GM12878 (cell line): ENCODE measurements at regions of chr3 and their contacts with region 1.

Region 1: DNA sequence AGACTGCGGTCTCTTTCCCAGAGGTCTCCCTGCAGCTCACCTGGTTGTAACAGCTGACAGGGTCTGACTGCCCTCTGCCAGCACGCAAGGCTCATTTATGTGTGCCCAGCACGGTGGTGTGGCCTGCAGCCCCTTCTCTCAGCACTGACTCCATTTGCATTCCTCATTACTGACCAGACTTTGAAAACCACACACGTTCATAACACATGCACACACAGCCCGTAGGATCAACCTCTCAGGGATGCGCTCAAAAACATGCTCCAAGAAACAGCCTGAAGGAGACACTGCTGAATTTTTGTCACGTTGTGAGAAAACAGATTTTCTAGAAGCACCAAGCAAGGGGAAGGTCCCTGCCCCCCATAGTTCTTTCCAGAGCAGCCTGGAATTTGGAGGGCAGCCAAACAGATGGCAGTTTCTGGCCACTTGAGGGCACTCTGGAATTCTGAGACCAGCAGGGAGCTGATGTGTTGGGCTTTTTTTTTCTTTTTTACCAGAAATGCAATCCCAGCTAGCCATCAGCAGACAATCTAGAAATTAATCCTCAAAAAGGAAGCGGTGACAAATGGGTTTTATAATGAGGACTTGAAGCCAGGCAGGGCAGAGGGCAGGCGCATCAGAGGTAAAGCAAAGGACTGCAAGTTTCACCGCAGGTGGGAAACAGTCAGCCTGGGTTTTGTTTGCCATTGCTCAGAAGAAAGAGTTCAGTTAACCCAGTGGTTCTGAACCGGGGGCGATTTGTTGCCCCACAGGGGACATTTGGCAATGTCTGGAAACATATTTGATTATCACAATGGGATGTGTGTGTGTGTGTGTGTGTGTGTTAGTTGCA is 170.5 kb upstream of the PROK2 start:
- DNase-seq: peak; percentile 61
- ATAC-seq: peak; percentile 81
- H3K4me3 ChIP-seq: no peak overlapping the region
- H3K27ac ChIP-seq: no peak overlapping the region
- H3K4me1 ChIP-seq: peaks cover 22% of the 10 kb centered on the region
- H3K27me3 ChIP-seq: no peaks in the 10 kb centered on the region
- CTCF ChIP-seq: peak; percentile 46 to 81 (median 67); a peak in 5 of 6 replicates
- EP300 ChIP-seq: no peak
- POLR2A ChIP-seq: no peak
- RAD21 ChIP-seq: peak; percentile 85

Region 2: DNA sequence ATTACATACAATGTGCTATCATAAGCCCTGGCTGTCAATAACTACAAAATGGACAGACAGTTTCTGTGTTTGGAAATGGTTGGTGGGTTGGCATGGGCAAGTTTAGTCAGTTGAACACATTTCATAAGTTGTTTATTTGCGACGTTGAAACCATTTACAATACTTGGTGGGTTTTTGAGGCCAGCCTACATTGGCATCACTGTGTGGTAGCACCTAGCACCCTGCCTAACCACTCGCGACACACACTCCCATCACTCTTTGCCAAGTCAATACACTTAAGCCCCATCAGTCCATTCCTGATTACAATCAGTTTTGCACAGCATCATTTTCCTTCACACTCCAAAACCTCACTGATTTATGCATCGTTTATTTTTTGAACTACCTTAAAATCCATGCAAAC is 184.3 kb before region 1 on chr3:
- CTCF ChIA-PET with region 1: no interaction called
- POLR2A ChIA-PET with region 1: no interaction called
- RAD21 ChIA-PET with region 1: no interaction called
- SMC1A ChIA-PET with region 1: no interaction called
- in situ Hi-C with region 1: no loop called
- intact Hi-C with region 1: no loop called
- DNase-seq: no peak
- ATAC-seq: no peak
- H3K4me3 ChIP-seq: no peak overlapping the region
- H3K27ac ChIP-seq: no peak overlapping the region
- H3K4me1 ChIP-seq: no peaks in the 10 kb centered on the region
- H3K27me3 ChIP-seq: no peaks in the 10 kb centered on the region; a peak in 1 of 4 replicates
- CTCF ChIP-seq: no peak
- EP300 ChIP-seq: no peak
- POLR2A ChIP-seq: no peak
- RAD21 ChIP-seq: no peak

Region 3: GRCh38 chr3:71978150-71978721 is 22.8 kb after region 1 on chr3:
- CTCF ChIA-PET with region 1: interaction called, 4 read pairs
- POLR2A ChIA-PET with region 1: no interaction called
- RAD21 ChIA-PET with region 1: interaction called, 21 read pairs
- SMC1A ChIA-PET with region 1: interaction called, 32 read pairs
- in situ Hi-C with region 1: no loop called
- intact Hi-C with region 1: no loop called
- DNase-seq: peak; percentile 81
- ATAC-seq: peak; percentile 90
- H3K4me3 ChIP-seq: peak overlapping the region; percentile 40; the same call in 1 of the 2 replicates
- H3K27ac ChIP-seq: peak overlapping the region; percentile 78
- H3K4me1 ChIP-seq: peaks cover 39% of the 10 kb centered on the region
- H3K27me3 ChIP-seq: no peaks in the 10 kb centered on the region
- CTCF ChIP-seq: no peak
- EP300 ChIP-seq: peak; percentile 52 to 59; a peak in 2 of 4 replicates
- POLR2A ChIP-seq: no peak
- RAD21 ChIP-seq: 0 out of 2 replicates have a peak, but pooled peaks have one; percentile 12

Region 4: DNA sequence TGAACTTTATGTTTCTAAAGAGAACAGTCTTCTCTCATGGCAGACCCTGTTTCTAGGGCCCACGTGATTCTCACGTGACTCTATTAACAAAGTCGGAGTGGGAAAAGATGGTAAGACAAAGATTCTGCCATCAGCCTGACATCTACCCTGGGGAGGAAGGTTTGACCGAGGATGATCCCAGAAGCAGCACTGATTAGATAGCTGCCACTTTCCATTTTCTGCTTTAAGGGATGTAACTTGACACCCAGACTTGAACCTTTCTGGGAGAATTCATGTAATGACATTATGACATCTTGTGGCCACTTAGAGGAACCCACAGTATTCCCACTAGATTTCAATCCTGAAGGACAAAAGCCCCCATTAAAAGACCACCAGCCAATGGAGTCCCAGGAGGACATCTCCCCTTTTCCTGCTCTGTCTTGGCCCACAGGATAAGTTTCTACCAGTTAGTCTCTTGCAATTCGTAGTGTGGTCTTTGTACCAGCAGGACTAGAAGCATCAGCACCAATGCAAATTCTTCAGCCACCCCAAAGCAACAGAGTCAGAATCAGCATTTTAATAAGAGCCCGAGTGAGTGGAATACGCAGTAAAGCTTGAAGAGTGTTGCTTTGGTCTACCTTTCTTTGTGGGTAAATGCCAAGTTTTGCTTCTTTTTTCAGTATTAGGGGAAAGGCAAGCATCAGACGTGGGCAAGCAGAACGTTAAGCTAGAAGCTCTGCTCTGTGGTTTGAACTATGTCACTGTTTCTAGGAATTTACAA is 310.0 kb after region 1 on chr3:
- CTCF ChIA-PET with region 1: interaction called, 5 read pairs
- POLR2A ChIA-PET with region 1: no interaction called
- RAD21 ChIA-PET with region 1: interaction called, 4 read pairs
- SMC1A ChIA-PET with region 1: interaction called, 4 read pairs
- in situ Hi-C with region 1: no loop called
- intact Hi-C with region 1: loop called (anchors 10 kb)
- DNase-seq: no peak
- ATAC-seq: peak; percentile 57
- H3K4me3 ChIP-seq: no peak overlapping the region
- H3K27ac ChIP-seq: no peak overlapping the region
- H3K4me1 ChIP-seq: peaks cover 43% of the 10 kb centered on the region
- H3K27me3 ChIP-seq: no peaks in the 10 kb centered on the region
- CTCF ChIP-seq: peak; percentile 3 to 35 (median 23); a peak in 2 of 6 replicates
- EP300 ChIP-seq: no peak
- POLR2A ChIP-seq: no peak
- RAD21 ChIP-seq: peak; percentile 62

Region 5: DNA sequence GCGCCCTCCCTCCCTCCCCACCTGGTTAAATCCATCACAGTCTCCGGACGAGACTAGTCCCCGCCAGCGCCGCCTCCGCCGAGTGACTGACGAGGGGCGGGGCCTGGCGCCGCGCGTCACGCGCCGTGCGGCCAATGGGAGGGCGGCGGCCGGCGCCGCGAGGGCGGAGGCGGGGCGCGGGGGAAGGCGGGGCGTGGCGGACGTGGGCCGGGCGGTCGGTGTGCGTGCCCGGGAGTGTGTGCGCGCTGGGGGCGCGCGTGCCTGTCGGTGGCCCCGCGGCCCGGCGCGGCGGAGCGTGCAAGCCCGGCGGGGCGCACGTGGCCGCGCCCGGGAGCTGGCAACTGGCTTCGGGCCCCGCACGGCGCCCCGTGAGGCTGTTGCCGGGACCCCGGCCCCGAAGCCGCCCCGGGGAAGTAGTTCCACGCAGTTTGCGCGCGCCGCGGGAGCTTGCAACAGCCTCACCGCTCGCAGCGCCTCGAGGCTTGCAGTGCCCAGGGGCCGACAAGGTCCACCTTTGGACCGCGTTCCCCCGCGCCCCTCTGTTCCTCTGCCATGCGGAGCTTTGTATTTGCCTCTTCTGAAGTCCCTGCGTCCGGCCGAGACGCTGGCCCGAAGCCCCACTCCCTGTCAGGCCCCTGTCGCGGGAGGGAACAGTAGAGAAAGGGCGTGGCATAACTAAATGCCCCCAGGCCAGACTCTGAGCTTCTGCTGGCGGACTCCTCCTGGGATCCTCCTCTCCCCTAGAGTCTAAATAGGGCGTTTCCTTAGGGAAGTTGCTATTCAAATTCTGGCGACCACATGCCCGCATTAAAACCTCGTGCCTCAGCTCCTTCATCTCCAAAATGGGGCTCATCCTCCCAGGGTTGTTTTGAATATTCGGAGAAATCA is 491.8 kb after region 1 on chr3:
- CTCF ChIA-PET with region 1: interaction called, 3 read pairs
- POLR2A ChIA-PET with region 1: no interaction called
- RAD21 ChIA-PET with region 1: no interaction called
- SMC1A ChIA-PET with region 1: no interaction called
- in situ Hi-C with region 1: no loop called
- intact Hi-C with region 1: loop called (anchors 10 kb)
- DNase-seq: no peak
- ATAC-seq: peak; percentile 81
- H3K4me3 ChIP-seq: peak overlapping the region; percentile 37; the same call in 1 of the 2 replicates
- H3K27ac ChIP-seq: no peak overlapping the region
- H3K4me1 ChIP-seq: peaks cover 6% of the 10 kb centered on the region; the same call in 1 of the 2 replicates
- H3K27me3 ChIP-seq: no peaks in the 10 kb centered on the region; a peak in 1 of 4 replicates
- CTCF ChIP-seq: no peak; a peak in 1 of 6 replicates
- EP300 ChIP-seq: no peak
- POLR2A ChIP-seq: no peak
- RAD21 ChIP-seq: no peak